Adrenal gland (tissue), 19 donors: ENCODE measurements at regions of chr6 and their contacts with region 1.

Region 1: DNA sequence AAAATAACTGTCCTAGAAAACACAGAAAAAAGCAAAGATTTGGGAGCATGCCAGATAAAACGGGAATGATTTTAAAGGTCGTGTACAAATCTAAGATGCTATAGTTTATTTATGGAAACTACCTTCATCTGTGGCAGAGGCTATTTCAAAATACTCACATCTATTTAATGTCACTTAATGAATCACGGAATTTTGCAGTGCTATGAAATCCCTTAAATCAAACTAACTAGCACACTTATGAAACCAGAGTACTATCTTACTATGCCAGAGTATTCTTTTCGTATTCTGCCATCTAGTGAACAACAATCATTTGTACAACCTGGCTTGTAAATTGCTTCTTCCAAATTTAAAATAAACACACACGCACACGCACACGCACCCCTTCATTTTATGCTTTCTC is 77.9 kb upstream of the BMP5 start:
- DNase-seq: no peak
- H3K4me3 ChIP-seq: no peak overlapping the region
- H3K27ac ChIP-seq: no peak overlapping the region
- H3K4me1 ChIP-seq: no peaks in the 10 kb centered on the region
- H3K27me3 ChIP-seq: no peaks in the 10 kb centered on the region
- CTCF ChIP-seq: peak; percentile 21 to 54 (median 36)
- POLR2A ChIP-seq: no peak

Region 2: GRCh38 chr6:55286824-55287223 is 666.5 kb before region 1 on chr6:
- intact Hi-C with region 1: loop called in 1 of 2 experiments (anchors 10 kb)
- DNase-seq: no peak
- H3K4me3 ChIP-seq: no peak overlapping the region
- H3K27ac ChIP-seq: no peak overlapping the region
- H3K4me1 ChIP-seq: no peaks in the 10 kb centered on the region
- H3K27me3 ChIP-seq: no peaks in the 10 kb centered on the region
- CTCF ChIP-seq: no peak
- POLR2A ChIP-seq: no peak

Region 3: GRCh38 chr6:55445648-55446204 is 507.6 kb before region 1 on chr6:
- intact Hi-C with region 1: loop called (anchors 5 kb)
- DNase-seq: peak in 1 of 7 donors; percentile 1
- H3K4me3 ChIP-seq: no peak overlapping the region
- H3K27ac ChIP-seq: no peak overlapping the region
- H3K4me1 ChIP-seq: no peaks in the 10 kb centered on the region
- H3K27me3 ChIP-seq: no peaks in the 10 kb centered on the region
- CTCF ChIP-seq: peak; percentile 28 to 64 (median 48)
- POLR2A ChIP-seq: no peak

Region 4: GRCh38 chr6:55617272-55617671 is 336.1 kb before region 1 on chr6:
- intact Hi-C with region 1: loop called in 1 of 2 experiments (anchors 10 kb)
- DNase-seq: peak in 4 of 7 donors; percentile 20 to 58 (median 39)
- H3K4me3 ChIP-seq: no peak overlapping the region
- H3K27ac ChIP-seq: no peak overlapping the region
- H3K4me1 ChIP-seq: no peaks in the 10 kb centered on the region
- H3K27me3 ChIP-seq: no peaks in the 10 kb centered on the region
- CTCF ChIP-seq: peak in 5 of 6 experiments; percentile 35 to 55 (median 49)
- POLR2A ChIP-seq: no peak

Region 5: GRCh38 chr6:55822815-55823214 is 130.5 kb before region 1 on chr6:
- intact Hi-C with region 1: no loop called
- DNase-seq: no peak
- H3K4me3 ChIP-seq: no peak overlapping the region
- H3K27ac ChIP-seq: no peak overlapping the region
- H3K4me1 ChIP-seq: no peaks in the 10 kb centered on the region
- H3K27me3 ChIP-seq: no peaks in the 10 kb centered on the region
- CTCF ChIP-seq: no peak
- POLR2A ChIP-seq: no peak